Sigmoid colon (tissue), 7 donors: ENCODE measurements at regions of chr2 and their contacts with region 1.

Region 1: DNA sequence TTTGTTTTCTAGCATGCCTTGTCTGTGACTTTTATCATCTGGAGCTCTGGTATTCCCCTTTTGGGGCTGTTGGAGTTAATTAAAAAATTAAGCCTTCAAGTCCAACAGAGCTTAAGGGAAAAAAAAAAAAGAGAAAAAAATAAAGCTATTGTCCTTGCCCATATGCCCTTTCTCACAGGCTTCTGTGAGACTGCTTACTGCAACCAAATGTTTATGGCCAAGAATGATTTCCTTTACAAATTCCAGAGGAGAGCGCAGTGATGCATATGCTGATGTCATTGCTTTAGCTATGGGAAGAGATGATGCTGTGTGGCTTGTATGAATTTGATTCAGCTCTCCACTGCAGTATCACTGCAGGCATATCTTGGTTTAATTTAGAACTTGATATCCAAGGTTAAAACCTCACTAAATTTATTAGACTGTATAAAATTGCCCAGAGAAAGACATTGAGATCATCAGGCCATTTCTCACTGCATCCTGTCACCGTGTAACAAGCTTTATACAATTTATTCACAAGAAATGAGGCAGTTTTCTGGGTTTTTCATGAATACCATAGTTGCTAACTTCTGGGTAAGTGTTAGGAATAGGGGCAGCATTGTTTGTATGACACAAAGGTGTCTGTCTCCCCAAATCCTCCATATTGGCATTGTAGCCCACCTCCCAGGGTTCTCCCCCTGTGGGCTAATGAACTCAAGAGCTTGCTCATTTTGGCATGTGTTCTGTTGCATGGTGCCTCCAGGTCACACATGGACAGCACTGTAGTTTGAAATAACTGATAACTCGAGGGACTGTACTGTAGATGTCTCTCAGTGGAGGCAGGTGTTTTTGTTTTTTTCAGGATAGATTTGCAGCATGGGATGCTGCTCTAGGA is 85.0 kb downstream of the TANC1 start:
- DNase-seq: no peak
- H3K4me3 ChIP-seq: no peak overlapping the region
- H3K27ac ChIP-seq: peak overlapping the region in 2 of 4 donors; percentile 60 to 67
- H3K4me1 ChIP-seq: peaks cover 0 to 57% (median 31%) of the 10 kb centered on the region in 4 donors
- H3K27me3 ChIP-seq: no peaks in the 10 kb centered on the region
- CTCF ChIP-seq: no peak
- EP300 ChIP-seq: no peak
- POLR2A ChIP-seq: no peak

Region 2: DNA sequence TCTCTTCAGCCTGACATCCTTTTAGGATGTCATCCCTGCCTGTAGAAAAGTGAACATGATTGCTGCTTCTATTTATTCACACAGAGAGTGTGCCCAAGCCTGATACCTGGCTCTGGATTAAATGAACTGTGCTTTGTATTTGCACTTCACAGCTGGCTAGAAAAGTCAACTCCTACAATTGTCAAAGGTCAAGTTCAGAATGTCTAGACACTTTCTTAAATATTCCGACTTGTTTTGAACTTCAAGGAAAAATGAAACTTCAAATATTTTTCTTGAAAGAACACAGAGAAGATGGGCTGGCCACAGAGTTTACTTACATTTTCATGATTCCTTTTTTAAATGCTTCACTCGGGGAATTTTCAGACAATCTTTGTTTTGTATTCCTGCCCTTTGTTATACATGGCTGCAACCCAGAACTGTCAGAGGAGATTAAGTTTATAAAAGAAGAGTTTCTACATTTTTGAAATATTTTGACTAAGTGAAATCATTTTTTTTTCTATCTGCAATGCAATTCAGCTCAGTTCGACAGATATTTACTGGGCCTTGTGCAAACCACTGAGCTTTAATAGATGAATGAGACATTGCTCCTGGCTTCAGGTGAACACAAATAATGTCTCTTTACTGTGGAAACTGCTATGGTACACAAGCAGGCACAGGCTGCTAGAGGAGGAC is 224.8 kb before region 1 on chr2:
- intact Hi-C with region 1: no loop called
- DNase-seq: no peak
- H3K4me3 ChIP-seq: no peak overlapping the region
- H3K27ac ChIP-seq: peak overlapping the region in 1 of 4 donors; percentile 58
- H3K4me1 ChIP-seq: peaks cover 0 to 12% (median 12%) of the 10 kb centered on the region in 4 donors
- H3K27me3 ChIP-seq: no peaks in the 10 kb centered on the region
- CTCF ChIP-seq: no peak
- EP300 ChIP-seq: no peak
- POLR2A ChIP-seq: no peak

Region 3: GRCh38 chr2:158936978-158937377 is 116.4 kb before region 1 on chr2:
- intact Hi-C with region 1: no loop called
- DNase-seq: peak; percentile 76
- H3K4me3 ChIP-seq: no peak overlapping the region
- H3K27ac ChIP-seq: peak overlapping the region in 3 of 4 donors; percentile 21 to 64 (median 61)
- H3K4me1 ChIP-seq: peaks cover 0 to 13% (median 2%) of the 10 kb centered on the region in 4 donors
- H3K27me3 ChIP-seq: no peaks in the 10 kb centered on the region
- CTCF ChIP-seq: no peak
- EP300 ChIP-seq: peak; percentile 46 to 94 (median 74)
- POLR2A ChIP-seq: no peak

Region 4: GRCh38 chr2:159010340-159010739 is 43.1 kb before region 1 on chr2:
- intact Hi-C with region 1: loop called (anchors 5 kb)
- DNase-seq: no peak
- H3K4me3 ChIP-seq: no peak overlapping the region
- H3K27ac ChIP-seq: peak overlapping the region in 1 of 4 donors; percentile 26
- H3K4me1 ChIP-seq: peaks cover 0 to 32% (median 19%) of the 10 kb centered on the region in 4 donors
- H3K27me3 ChIP-seq: no peaks in the 10 kb centered on the region
- CTCF ChIP-seq: no peak
- EP300 ChIP-seq: no peak
- POLR2A ChIP-seq: no peak